B cell (primary cell): ENCODE measurements at regions of chr4 and their contacts with region 1.

Region 1: GRCh38 chr4:109424093-109424841 is 9.3 kb upstream of the SEC24B start:
- DNase-seq: no peak
- ATAC-seq: no peak
- H3K4me3 ChIP-seq: no peak overlapping the region
- H3K4me3 Mint-ChIP-seq: no peak overlapping the region
- H3K27ac ChIP-seq: no peak overlapping the region
- H3K27ac Mint-ChIP-seq: no peak overlapping the region
- H3K4me1 ChIP-seq: peaks cover 0 to 3% of the 10 kb centered on the region in 2 donors
- H3K4me1 Mint-ChIP-seq: peaks cover 2% of the 10 kb centered on the region
- H3K27me3 ChIP-seq: no peaks in the 10 kb centered on the region
- H3K27me3 Mint-ChIP-seq: peaks cover 3% of the 10 kb centered on the region
- CTCF ChIP-seq: no peak

Region 2: DNA sequence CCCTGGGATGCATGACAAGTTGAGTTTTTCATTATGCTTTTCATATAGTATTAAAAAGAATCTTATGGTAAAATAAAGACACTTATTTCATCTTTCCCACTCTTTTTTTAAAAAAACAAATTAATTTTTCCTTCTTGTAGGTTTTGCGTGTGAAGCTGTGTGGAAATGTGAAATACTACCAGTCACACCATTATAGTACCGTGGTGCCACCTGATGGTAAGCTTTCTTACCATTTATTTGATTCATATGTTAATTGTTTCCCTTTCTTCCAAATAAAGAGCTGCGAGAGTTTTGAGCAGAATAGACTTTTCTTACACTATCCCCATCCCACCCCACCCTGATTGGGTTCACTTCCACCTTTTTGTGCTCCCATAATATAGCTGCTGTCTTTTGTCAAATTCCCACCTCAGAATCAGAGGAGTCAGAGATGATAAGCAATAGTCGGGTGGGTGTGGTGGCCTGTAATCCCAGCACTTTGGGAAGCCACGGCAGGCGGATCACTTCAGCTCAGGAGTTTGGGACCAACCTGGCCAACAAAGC is 234.7 kb after region 1 on chr4:
- CTCF ChIA-PET with region 1: interaction called, 4 read pairs
- POLR2A ChIA-PET with region 1: no interaction called
- intact Hi-C with region 1: loop called (anchors 1 kb)
- DNase-seq: no peak
- ATAC-seq: no peak
- H3K4me3 ChIP-seq: no peak overlapping the region
- H3K4me3 Mint-ChIP-seq: no peak overlapping the region
- H3K27ac ChIP-seq: no peak overlapping the region
- H3K27ac Mint-ChIP-seq: no peak overlapping the region
- H3K4me1 ChIP-seq: no peaks in the 10 kb centered on the region
- H3K4me1 Mint-ChIP-seq: peaks cover 2% of the 10 kb centered on the region
- H3K27me3 ChIP-seq: no peaks in the 10 kb centered on the region
- H3K27me3 Mint-ChIP-seq: no peaks in the 10 kb centered on the region
- CTCF ChIP-seq: no peak

Region 3: GRCh38 chr4:109803924-109804571 is 379.8 kb after region 1 on chr4:
- CTCF ChIA-PET with region 1: interaction called, 11 read pairs
- POLR2A ChIA-PET with region 1: interaction called, 7 read pairs
- intact Hi-C with region 1: loop called (anchors 1 kb)
- DNase-seq: peak; percentile 55
- ATAC-seq: no peak
- H3K4me3 ChIP-seq: no peak overlapping the region
- H3K4me3 Mint-ChIP-seq: no peak overlapping the region
- H3K27ac ChIP-seq: no peak overlapping the region
- H3K27ac Mint-ChIP-seq: no peak overlapping the region
- H3K4me1 ChIP-seq: no peaks in the 10 kb centered on the region
- H3K4me1 Mint-ChIP-seq: no peaks in the 10 kb centered on the region
- H3K27me3 ChIP-seq: no peaks in the 10 kb centered on the region
- H3K27me3 Mint-ChIP-seq: peaks cover 22% of the 10 kb centered on the region
- CTCF ChIP-seq: peak; percentile 39

Region 4: DNA sequence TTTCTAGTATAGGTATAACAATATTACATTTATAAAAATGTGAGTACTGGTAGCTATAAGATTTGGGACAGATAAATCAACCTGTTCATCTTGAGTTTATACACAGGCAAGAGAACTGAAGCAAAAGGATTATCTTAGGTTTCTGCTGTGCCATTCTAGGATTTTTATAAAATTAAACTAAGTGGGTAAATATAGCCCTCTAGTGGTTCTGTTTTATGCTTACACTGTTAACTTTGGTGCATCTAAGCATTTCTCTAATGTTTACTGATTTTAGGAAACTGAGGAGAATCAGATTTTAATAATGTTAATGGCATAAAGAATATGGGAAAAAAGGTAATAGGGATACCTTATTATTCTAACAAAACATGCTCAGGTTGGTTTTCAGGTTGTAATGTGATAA is 402.5 kb after region 1 on chr4:
- CTCF ChIA-PET with region 1: interaction called, 28 read pairs
- POLR2A ChIA-PET with region 1: no interaction called
- intact Hi-C with region 1: no loop called
- DNase-seq: peak; percentile 30
- ATAC-seq: peak; percentile 24
- H3K4me3 ChIP-seq: no peak overlapping the region
- H3K4me3 Mint-ChIP-seq: no peak overlapping the region
- H3K27ac ChIP-seq: no peak overlapping the region
- H3K27ac Mint-ChIP-seq: no peak overlapping the region
- H3K4me1 ChIP-seq: no peaks in the 10 kb centered on the region
- H3K4me1 Mint-ChIP-seq: no peaks in the 10 kb centered on the region
- H3K27me3 ChIP-seq: no peaks in the 10 kb centered on the region
- H3K27me3 Mint-ChIP-seq: no peaks in the 10 kb centered on the region
- CTCF ChIP-seq: peak; percentile 76

Region 5: DNA sequence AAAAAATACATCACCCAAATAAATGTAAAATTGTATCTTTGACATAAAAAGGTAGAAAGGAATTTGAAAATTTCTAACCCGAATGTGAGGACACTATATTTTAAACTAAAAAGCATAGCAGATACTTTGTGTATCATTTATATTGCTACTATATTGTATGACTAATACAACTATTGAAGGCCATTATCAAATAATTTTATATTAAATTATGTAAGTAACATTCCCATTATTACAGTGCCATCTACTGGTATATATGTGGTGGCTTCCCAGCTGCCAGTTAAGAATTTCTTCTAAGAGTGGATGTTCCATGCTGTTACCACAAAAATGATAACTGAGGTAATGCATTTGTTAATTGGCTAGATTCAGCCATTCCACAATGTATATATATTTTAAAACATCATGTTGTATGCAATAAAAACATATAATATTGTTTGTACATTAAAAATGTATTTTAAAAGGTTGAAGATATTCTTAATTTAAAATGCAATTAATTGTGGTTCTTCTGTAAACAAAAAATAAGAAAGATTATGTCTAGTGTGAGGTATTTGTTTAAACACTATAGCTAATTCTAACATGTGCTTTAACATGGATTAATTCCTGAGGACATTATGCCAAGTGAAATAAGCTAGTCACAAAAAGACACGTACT is 553.7 kb after region 1 on chr4:
- CTCF ChIA-PET with region 1: interaction called, 43 read pairs
- POLR2A ChIA-PET with region 1: no interaction called
- intact Hi-C with region 1: loop called (anchors 1 kb)
- DNase-seq: peak; percentile 35
- ATAC-seq: no peak
- H3K4me3 ChIP-seq: no peak overlapping the region
- H3K4me3 Mint-ChIP-seq: no peak overlapping the region
- H3K27ac ChIP-seq: no peak overlapping the region
- H3K27ac Mint-ChIP-seq: no peak overlapping the region
- H3K4me1 ChIP-seq: no peaks in the 10 kb centered on the region
- H3K4me1 Mint-ChIP-seq: no peaks in the 10 kb centered on the region
- H3K27me3 ChIP-seq: no peaks in the 10 kb centered on the region
- H3K27me3 Mint-ChIP-seq: peaks cover 38% of the 10 kb centered on the region
- CTCF ChIP-seq: peak; percentile 69